ENCODE measurements at regions of chr10 and their contacts with region 1.

Region 1: GRCh38 chr10:100998991-100999741 is 442 bp upstream of the LZTS2 start:
- DNase-seq: peak; percentile 52 to 93 (median 87)

Region 2: DNA sequence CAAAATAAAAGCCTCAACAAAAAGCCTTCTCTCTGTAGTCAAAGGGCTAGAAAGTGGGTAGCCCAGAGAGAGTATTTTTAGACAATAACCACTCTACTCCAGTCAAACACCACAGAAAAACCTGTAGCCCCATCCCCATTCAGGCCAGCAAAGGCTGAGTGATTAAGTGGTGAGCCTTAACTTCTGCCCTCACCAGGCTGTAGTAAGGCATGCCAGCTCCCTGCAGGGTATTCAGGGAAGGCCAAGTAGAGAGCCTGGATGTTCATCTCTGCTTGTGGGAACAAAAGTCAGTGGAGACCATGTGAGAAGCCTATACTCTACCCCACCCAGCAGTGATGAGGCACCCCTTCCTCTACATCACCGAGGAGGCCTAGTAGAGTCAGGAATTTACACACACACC is 412.2 kb before region 1 on chr10:
- intact Hi-C with region 1: no loop called
- DNase-seq: no peak

Region 3: GRCh38 chr10:100912605-100913469 is 86.3 kb before region 1 on chr10 and contains the start of gene SLF2:
- intact Hi-C with region 1: loop called (anchors 5 kb)
- DNase-seq: peak; percentile 94 to 100 (median 99)

Region 4: DNA sequence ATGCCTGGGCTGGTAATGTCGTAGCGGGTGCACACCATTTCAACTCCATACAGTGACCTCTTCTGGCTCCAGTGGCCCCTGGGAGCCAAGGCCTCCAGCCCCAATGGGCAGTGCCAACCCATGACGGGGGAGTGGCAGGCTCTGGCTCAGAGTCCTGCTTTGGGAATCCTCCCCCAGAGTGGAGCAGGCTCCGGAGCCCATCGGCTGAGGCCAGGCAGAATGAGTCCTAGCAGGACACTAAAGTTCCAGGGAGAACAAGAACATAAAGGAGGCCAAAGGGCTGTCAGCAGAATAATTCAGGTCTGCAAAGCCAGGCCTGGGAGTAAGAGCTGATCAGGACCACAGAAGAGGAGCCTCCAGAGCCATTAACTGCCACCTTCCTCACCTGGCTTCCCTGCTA is 196.8 kb after region 1 on chr10:
- intact Hi-C with region 1: no loop called
- DNase-seq: no peak

Measured in head of caudate nucleus (tissue), 42 donors.